ENCODE measurements at regions of chr2 and their contacts with region 1.

Region 1: GRCh38 chr2:137155356-137156104 is 390.2 kb downstream of the THSD7B start:
- H3K4me3 Mint-ChIP-seq: no peak overlapping the region
- H3K27ac Mint-ChIP-seq: no peak overlapping the region
- H3K4me1 Mint-ChIP-seq: no peaks in the 10 kb centered on the region
- H3K27me3 Mint-ChIP-seq: peaks cover 2% of the 10 kb centered on the region

Region 2: DNA sequence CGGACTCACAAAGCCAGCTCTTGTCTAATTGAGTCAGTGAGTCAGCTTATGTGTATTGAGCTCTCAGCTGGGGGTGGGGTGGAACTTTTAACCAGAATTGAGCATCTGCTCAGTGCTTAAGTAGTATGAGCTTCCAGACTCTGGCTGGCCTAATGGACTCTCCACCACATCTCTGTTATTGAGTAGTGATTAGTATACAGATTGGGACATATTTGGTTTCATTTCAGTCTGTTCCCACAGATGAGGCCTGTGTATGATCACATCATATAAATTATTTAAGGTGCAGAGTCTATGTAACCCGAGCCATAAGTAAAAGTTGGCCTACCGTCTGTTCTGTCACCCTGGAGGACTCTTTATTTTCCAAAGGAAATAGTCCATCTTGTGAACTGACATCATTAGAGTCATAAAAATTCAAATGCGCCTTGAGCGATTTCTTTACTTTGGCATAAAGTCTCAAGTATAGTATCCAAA is 238.1 kb before region 1 on chr2:
- intact Hi-C with region 1: loop called (anchors 10 kb)
- H3K4me3 Mint-ChIP-seq: no peak overlapping the region
- H3K27ac Mint-ChIP-seq: no peak overlapping the region
- H3K4me1 Mint-ChIP-seq: no peaks in the 10 kb centered on the region
- H3K27me3 Mint-ChIP-seq: no peaks in the 10 kb centered on the region

Measured in dendritic cell treated with granulocyte-macrophage colony-stimulating factor and Interleukin-4, amounts not matched to agents 40 ng/mL and 50 ng/mL, for 4 days (primary cell).